K562 (cell line): ENCODE measurements at regions of chr13 and their contacts with region 1.

Region 1: GRCh38 chr13:91196958-91197357 is 150.5 kb upstream of the MIR17HG start:
- DNase-seq: no peak
- ATAC-seq: no peak
- H3K4me3 ChIP-seq: no peak overlapping the region
- H3K27ac ChIP-seq: no peak overlapping the region
- H3K4me1 ChIP-seq: no peaks in the 10 kb centered on the region
- H3K27me3 ChIP-seq: no peaks in the 10 kb centered on the region
- CTCF ChIP-seq: no peak
- EP300 ChIP-seq: no peak
- POLR2A ChIP-seq: no peak
- RAD21 ChIP-seq: no peak

Region 2: DNA sequence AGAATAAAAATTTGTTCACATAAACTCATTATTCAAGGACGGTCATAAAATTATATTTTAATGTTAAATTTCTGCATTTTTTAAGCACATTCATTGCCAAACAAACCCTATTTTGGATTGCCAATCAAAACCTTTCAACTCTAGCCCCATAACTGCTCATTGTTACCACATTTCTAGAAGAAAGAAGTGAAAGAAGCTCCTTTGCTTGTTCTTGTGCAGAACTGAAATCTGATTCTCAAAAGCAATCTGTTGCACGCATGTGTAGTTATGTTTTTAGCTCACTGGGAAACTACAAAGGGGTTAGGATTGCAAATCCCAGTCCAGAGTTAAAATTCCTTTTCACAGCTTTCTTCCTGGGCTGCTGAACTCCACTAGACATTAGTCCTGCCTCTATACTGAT is 41.1 kb after region 1 on chr13:
- CTCF ChIA-PET with region 1: no interaction called
- POLR2A ChIA-PET with region 1: interaction called, 3 read pairs
- in situ Hi-C with region 1: no loop called
- intact Hi-C with region 1: loop called (anchors 5 kb)
- DNase-seq: no peak
- ATAC-seq: no peak
- H3K4me3 ChIP-seq: no peak overlapping the region
- H3K27ac ChIP-seq: no peak overlapping the region
- H3K4me1 ChIP-seq: no peaks in the 10 kb centered on the region
- H3K27me3 ChIP-seq: no peaks in the 10 kb centered on the region
- CTCF ChIP-seq: no peak
- EP300 ChIP-seq: no peak
- POLR2A ChIP-seq: no peak
- RAD21 ChIP-seq: no peak

Region 3: GRCh38 chr13:91286317-91286716 is 89.4 kb after region 1 on chr13:
- CTCF ChIA-PET with region 1: no interaction called
- POLR2A ChIA-PET with region 1: no interaction called
- in situ Hi-C with region 1: no loop called
- intact Hi-C with region 1: loop called (anchors 5 kb)
- DNase-seq: no peak
- ATAC-seq: peak; percentile 11; the same call in 2 of the 3 replicates
- H3K4me3 ChIP-seq: no peak overlapping the region
- H3K27ac ChIP-seq: no peak overlapping the region
- H3K4me1 ChIP-seq: no peaks in the 10 kb centered on the region
- H3K27me3 ChIP-seq: no peaks in the 10 kb centered on the region
- CTCF ChIP-seq: no peak
- EP300 ChIP-seq: no peak
- POLR2A ChIP-seq: no peak
- RAD21 ChIP-seq: no peak

Region 4: DNA sequence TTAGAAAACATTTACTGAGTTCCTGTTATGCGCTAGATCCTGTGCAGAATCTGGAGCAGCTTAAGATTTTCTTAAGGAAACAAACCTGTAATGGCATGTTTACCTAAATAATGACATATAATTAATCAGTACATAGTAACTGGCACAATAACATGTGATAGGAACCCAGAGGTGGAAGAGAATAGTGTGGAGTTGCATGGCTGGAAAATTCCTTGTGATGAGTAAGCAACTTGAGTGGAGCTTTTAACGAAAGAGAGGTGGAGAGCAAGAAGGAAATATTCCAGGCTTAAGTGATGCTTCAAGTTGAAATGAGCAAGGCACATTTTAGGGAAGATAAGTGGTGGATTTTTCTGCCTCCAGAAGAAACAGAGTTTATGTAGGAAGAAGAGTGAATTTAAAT is 192.2 kb after region 1 on chr13:
- CTCF ChIA-PET with region 1: no interaction called
- POLR2A ChIA-PET with region 1: no interaction called
- in situ Hi-C with region 1: no loop called
- intact Hi-C with region 1: loop called (anchors 5 kb)
- DNase-seq: no peak
- ATAC-seq: no peak
- H3K4me3 ChIP-seq: no peak overlapping the region
- H3K27ac ChIP-seq: no peak overlapping the region
- H3K4me1 ChIP-seq: no peaks in the 10 kb centered on the region
- H3K27me3 ChIP-seq: no peaks in the 10 kb centered on the region
- CTCF ChIP-seq: no peak
- EP300 ChIP-seq: no peak
- POLR2A ChIP-seq: no peak
- RAD21 ChIP-seq: no peak